Colonic mucosa (tissue), 4 donors: ENCODE measurements at regions of chr11 and their contacts with region 1.

Region 1: GRCh38 chr11:30346068-30346688 is 23.3 kb downstream of the ARL14EP start:
- DNase-seq: no peak
- H3K4me3 ChIP-seq: no peak overlapping the region
- H3K27ac ChIP-seq: no peak overlapping the region
- H3K4me1 ChIP-seq: no peaks in the 10 kb centered on the region
- H3K27me3 ChIP-seq: no peaks in the 10 kb centered on the region
- CTCF ChIP-seq: peak; percentile 59

Region 2: DNA sequence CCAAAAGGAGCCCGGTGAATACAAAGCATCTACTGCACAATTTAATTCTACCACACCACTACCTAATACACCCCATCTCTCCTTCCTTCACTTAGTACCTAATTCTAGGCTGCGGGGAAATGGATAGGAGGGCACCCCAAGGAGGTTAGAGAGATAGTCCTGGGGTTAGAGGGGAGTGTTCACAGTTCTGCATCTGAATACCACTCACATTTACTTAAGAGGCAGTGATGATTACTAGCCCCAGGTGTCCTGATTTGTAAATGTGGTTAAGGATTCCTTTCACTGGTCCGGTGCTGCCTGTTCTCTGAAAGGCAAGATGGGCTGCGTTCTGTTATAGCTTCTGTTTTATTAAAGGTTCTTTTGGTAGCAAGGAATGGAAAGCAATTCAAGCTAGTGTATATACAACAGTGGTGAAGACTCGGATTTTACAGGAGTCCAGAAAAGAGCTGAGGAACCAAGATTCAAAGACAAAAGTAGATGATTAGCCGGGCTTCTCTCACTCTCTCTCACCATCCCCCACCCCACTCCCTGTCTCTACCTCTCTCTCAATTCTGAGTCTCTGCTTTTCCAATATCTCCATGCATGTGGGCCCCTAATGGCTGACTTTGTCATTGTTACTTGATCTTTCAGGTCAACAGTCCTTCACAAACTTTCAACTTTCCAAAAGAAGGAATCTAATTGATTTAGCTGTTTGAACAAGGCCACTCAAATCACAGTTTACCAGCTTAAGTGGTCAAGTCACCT is 320.6 kb before region 1 on chr11:
- intact Hi-C with region 1: no loop called
- DNase-seq: no peak
- H3K4me3 ChIP-seq: no peak overlapping the region
- H3K27ac ChIP-seq: no peak overlapping the region
- H3K4me1 ChIP-seq: no peaks in the 10 kb centered on the region
- H3K27me3 ChIP-seq: no peaks in the 10 kb centered on the region
- CTCF ChIP-seq: no peak

Region 3: DNA sequence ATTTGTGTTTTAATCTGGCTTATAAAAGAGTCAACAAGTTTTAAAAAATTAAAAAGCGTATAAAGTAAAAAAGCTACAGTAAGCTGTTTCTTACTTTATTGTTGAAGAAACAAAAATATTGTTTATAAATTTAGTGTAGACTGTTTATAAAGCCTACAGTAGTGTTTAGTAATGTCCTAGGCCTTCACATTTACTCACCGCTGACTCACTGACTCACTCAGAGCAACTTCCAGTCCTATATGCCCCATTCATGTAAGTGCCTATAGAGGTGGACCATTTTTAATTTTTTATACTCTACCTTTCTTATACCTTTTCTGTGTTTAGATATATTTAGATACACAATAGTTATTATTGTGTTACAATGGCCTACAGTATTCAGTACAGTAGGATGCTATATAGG is 227.8 kb after region 1 on chr11:
- intact Hi-C with region 1: no loop called
- DNase-seq: no peak
- H3K4me3 ChIP-seq: no peak overlapping the region
- H3K27ac ChIP-seq: no peak overlapping the region
- H3K4me1 ChIP-seq: no peaks in the 10 kb centered on the region
- H3K27me3 ChIP-seq: no peaks in the 10 kb centered on the region
- CTCF ChIP-seq: no peak

Region 4: DNA sequence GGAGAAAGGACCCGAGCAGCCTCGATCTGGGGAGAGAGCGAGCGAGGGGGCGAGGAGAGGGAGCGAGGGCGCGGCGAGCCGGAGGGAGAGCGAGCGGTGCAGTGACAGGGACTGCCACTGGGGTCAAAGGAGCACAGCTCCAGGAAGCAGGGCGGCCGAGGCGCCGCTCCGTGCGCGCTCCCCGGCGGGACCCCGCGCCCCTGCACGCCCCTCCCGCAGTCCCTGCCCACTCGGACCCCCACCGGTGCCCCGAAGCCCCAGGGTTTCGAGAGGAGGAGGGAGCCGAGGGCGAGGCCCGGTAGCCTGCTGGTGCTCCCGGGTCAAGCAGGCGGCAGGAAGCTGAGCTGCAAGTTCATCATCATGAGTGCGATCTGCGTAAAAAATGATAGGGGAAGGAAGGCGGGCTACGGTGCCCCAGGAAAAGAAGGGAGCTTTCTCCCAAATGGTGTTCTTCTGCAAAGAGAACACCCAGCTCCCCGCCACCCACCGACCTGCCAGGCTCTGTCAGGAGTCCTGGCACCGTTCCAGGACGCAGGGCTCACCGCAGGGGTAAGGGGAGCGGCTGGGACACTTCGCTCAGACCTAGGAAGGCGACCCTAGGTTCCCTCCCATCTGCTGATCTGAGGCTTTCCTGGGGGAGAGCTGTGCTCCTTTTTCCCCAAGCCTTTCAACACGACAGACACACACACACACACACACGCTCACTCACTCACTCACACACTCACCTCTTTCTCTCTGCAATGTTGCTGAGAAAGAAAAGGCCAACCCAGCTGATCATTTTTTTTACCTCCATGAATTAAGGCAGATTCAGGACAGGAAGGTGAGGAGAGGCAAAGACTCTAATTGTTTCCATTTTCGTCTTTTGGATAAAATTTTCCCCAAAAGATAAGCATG is 240.3 kb after region 1 on chr11 and contains the start of gene MPPED2:
- intact Hi-C with region 1: loop called (anchors 10 kb)
- DNase-seq: peak; percentile 19
- H3K4me3 ChIP-seq: peak within 1 kb of the TSS; percentile 64
- H3K27ac ChIP-seq: peak within 1 kb of the TSS; percentile 6
- H3K4me1 ChIP-seq: peaks cover 3% of the 10 kb centered on the region
- H3K27me3 ChIP-seq: peaks cover 16% of the 10 kb centered on the region
- CTCF ChIP-seq: peak; percentile 26
- total RNA-seq, gene MPPED2: 0.57 to 1.8 TPM

Region 5: DNA sequence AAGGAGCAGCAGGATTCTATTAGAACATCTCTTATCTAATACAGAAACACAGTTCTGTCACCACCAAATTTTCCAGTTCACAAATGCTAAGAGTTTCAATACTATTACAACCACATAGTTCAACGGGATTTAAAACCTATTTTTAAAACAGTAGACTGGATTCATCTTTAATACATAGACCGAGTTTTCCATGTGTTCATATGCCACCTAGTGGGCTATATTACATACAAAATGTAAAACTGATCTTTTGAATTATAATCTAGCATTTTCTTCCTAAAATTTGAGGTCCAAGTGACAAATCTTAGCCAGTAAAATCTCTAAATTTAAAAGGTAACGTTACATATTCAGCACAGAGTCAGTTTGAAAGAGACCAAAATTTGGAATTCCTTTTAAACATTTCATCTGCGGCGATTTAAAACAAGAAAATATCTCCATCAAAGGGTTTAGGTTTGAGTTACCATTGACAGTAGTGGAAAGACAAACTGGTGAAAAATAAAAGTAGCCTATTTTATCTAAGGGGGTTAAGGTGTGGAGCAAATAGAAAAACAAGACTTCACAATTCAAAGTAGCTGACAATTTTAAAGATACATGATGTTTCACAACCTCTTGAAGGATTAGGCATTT is 509.3 kb after region 1 on chr11:
- intact Hi-C with region 1: loop called (anchors 2 kb)
- DNase-seq: no peak
- H3K4me3 ChIP-seq: no peak overlapping the region
- H3K27ac ChIP-seq: no peak overlapping the region
- H3K4me1 ChIP-seq: no peaks in the 10 kb centered on the region
- H3K27me3 ChIP-seq: no peaks in the 10 kb centered on the region
- CTCF ChIP-seq: peak; percentile 23

Region 6: DNA sequence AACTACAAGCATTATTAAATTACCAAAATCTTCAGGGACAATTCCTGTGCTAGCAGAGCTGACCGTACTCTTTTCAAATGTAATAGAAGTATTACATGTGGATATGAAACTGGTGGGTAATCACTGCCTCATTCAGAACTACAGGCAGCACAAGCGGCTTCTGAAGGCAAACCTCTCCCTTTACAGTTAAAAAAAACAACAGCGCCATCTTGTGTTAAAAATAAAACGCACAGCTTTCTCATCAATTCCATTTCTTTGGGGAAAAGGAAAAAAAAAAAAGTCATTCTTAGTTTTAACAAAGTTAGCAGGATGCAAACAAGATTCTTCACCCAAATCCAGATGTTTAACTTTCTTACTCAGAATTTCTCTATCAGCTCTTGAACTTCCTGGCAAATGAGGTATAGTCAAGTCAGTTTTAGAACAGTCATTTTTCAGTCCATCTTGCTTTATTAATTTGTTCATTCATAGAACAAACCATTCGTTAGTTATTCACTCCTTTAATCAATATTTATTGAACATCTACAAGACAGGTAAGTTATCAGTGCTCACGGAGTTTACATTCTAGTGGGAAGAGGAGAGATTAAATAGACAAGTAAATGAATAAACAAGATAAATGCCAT is 571.8 kb after region 1 on chr11:
- intact Hi-C with region 1: loop called (anchors 2 kb)
- DNase-seq: no peak
- H3K4me3 ChIP-seq: no peak overlapping the region
- H3K27ac ChIP-seq: no peak overlapping the region
- H3K4me1 ChIP-seq: no peaks in the 10 kb centered on the region
- H3K27me3 ChIP-seq: no peaks in the 10 kb centered on the region
- CTCF ChIP-seq: peak; percentile 79